Activated CD4-positive, alpha-beta T cell treated with anti-CD3 and anti-CD28 coated beads for 36 hours (primary cell): ENCODE measurements at regions of chr16 and their contacts with region 1.

Region 1: DNA sequence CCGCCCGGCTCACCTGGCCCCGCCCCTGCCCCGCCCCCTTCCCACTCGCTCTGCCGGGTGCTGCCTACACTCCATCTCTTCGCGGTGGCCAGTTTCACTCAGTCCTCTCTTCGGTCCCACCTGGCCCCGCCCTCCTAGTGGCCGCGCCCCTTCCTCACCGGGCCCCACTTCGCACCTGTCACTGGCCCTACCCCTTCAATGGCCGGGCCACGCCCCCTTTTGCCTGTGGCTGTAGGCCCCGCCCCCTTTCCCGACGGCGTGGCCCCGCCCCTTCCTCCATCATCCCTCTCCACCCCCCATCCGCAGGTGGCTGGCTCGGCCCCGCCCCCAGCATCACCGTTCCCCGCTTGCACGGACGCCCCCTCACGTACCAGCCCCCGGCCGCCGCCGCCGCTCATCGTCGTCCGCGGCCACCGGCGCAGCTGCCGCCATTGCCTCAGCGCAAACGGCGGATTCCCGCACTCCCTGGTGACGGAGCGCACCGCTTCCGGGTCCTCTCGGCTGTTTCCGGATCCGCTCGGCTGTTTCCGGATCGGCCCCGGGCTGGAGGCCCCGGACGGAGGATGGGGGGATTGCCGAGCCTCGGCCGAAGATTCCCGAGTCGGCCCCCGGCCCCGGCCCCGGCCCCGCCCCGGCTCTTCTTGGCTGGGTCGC is at the start of gene RABEP2:
- DNase-seq: peak; percentile 99
- ATAC-seq: peak; percentile 93
- H3K4me3 Mint-ChIP-seq: peak within 1 kb of the TSS; percentile 87
- H3K27ac Mint-ChIP-seq: peak within 1 kb of the TSS; percentile 96
- H3K4me1 Mint-ChIP-seq: peaks cover 14% of the 10 kb centered on the region
- H3K27me3 Mint-ChIP-seq: no peaks in the 10 kb centered on the region
- total RNA-seq, gene RABEP2: 8.1 to 12.9 TPM

Region 2: GRCh38 chr16:28846080-28846932 is 78.6 kb before region 1 on chr16 and contains the start of gene TUFM:
- CTCF ChIA-PET with region 1: no interaction called
- POLR2A ChIA-PET with region 1: no interaction called
- intact Hi-C with region 1: loop called in 1 of 2 experiments (anchors 1 kb)
- DNase-seq: peak; percentile 99
- ATAC-seq: peak; percentile 94
- H3K4me3 Mint-ChIP-seq: peak within 1 kb of the TSS; percentile 97
- H3K27ac Mint-ChIP-seq: peak within 1 kb of the TSS; percentile 97
- H3K4me1 Mint-ChIP-seq: peaks cover 23% of the 10 kb centered on the region
- H3K27me3 Mint-ChIP-seq: no peaks in the 10 kb centered on the region
- total RNA-seq, gene TUFM: 224 to 241 TPM

Region 3: GRCh38 chr16:28863929-28864793 is 60.7 kb before region 1 on chr16:
- CTCF ChIA-PET with region 1: no interaction called
- POLR2A ChIA-PET with region 1: interaction called, 4 read pairs
- intact Hi-C with region 1: loop called (anchors 1 to 5 kb)
- DNase-seq: peak; percentile 44
- ATAC-seq: no peak
- H3K4me3 Mint-ChIP-seq: peak overlapping the region; percentile 96
- H3K27ac Mint-ChIP-seq: peak overlapping the region; percentile 96
- H3K4me1 Mint-ChIP-seq: peaks cover 21% of the 10 kb centered on the region
- H3K27me3 Mint-ChIP-seq: no peaks in the 10 kb centered on the region

Region 4: DNA sequence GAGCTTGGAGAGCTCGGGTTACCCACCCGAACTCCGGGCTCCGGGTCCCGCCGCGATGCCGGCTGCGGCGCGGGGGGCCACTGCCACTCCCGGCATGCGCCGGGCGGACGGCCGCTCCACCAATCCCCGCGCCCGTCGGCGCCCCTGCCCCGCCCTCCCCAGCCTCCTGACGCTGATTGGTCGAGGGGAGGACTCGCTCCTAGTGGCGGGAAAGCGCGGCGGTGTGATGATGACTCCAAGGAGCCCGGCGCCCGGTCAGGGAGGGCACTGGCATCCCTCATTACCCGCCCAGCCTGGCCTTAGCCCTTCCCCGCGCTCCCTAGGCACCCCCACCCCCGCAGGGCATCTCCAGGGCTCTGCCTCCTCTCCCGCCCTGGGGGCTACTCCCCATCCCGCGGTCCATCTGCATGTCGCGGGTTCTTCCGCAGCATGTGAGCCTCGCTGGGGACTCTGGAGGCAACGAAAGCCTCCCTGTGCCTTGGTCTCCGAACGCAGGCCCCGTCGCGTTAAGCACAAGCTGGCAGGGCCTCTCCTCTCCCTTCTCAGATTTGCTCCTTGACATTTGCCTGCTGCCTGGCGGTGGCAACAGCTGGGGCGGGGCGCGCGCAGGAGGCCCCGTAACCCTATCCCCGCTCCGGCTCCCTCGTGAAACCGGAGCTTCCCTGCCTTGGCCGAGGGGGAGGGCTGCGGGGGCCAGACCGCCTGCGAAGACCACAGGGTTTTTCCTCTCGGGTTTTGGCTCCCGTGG is 44.8 kb before region 1 on chr16:
- CTCF ChIA-PET with region 1: no interaction called
- POLR2A ChIA-PET with region 1: no interaction called
- intact Hi-C with region 1: loop called (anchors 1 to 5 kb)
- DNase-seq: peak; percentile 97
- ATAC-seq: peak; percentile 97
- H3K4me3 Mint-ChIP-seq: peak overlapping the region; percentile 85
- H3K27ac Mint-ChIP-seq: peak overlapping the region; percentile 76
- H3K4me1 Mint-ChIP-seq: peaks cover 20% of the 10 kb centered on the region
- H3K27me3 Mint-ChIP-seq: peaks cover 7% of the 10 kb centered on the region

Region 5: DNA sequence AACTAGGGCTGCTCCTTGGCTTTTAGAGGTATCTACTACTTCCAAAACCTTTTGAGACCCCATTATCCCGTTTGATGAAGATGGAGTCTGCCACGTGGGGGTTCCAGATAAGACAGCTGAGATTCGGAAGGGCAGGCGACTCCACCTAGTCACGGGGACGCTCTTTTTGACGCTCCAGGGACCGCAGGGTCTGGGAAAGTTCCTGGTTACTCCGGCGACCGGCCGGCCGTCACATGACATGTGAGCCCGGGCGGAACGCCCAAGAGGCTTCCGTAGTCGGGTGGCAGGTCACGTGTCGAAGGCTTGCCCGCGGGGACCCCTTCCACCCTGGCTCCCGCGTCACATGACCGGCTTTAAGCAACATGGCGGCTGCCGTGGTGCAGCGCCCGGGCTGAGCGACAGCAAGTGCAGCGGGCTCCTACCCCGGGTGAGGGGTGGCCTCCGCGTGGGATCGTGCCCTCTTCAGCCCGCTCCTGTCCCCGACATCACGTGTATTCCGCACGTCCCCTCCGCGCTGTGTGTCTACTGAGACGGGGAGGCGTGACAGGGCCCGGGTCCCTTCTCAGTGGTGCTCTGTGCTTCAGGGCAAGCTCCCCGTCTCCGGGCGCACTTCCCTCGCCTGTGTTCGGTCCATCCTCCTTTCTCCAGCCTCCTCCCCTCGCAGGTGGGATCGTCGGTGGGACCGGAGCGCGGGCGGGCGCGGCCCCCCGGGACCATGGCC is 49.7 kb after region 1 on chr16 and contains the start of gene SPNS1:
- CTCF ChIA-PET with region 1: interaction called, 3 read pairs
- POLR2A ChIA-PET with region 1: no interaction called
- intact Hi-C with region 1: loop called in 1 of 2 experiments (anchors 1 kb)
- DNase-seq: peak; percentile 98
- ATAC-seq: peak; percentile 94
- H3K4me3 Mint-ChIP-seq: peak within 1 kb of the TSS; percentile 98
- H3K27ac Mint-ChIP-seq: peak within 1 kb of the TSS; percentile 93
- H3K4me1 Mint-ChIP-seq: peaks cover 30% of the 10 kb centered on the region
- H3K27me3 Mint-ChIP-seq: no peaks in the 10 kb centered on the region
- total RNA-seq, gene SPNS1: 12.7 to 14.2 TPM